CD4-positive, alpha-beta memory T cell (primary cell): ENCODE measurements at regions of chr15 and their contacts with region 1.

Region 1: DNA sequence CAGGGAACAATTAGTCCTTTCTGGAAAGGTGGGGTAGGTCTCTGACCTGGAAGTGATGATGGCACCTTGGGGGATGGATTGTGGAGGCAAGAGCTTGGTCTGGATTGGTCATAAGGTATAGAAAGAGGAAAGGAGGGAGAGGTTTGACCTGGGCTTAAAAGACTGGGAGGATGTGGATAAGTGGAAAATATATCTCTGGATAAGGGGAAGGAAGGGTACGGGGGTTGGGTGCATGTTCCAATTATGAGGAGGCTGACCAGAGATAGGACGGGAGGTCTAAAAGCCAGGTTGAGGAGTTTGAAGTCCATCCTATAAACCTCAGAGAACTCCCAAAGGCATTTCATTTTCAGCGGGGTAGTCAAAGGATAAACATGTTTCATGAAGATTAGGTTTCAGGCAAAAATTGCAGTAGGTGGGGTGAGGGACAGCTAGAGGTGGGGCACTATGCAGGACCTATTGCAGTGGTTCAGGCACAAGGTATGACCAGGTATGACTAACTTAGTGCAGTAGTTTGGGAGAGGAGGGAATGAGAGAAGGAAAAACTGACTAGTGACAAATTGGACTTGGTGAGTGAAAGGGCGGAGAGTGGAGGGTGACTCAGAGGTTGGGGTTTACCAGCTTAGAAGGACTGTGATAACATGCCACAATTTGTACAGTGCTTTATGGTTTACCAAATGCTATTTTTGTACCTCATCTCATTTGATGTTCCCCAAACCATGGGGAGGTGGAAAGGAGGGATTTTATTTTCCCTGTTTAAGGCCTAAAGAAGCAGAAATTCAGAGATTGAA is 10.7 kb downstream of the PDE8A start:
- DNase-seq: peak in 1 of 5 donors; percentile 61
- H3K4me3 ChIP-seq: no peak overlapping the region
- H3K4me3 Mint-ChIP-seq: peak overlapping the region in 4 of 8 donors; percentile 12 to 55 (median 32)
- H3K27ac ChIP-seq: no peak overlapping the region
- H3K27ac Mint-ChIP-seq: peak overlapping the region in 6 of 7 donors; percentile 1 to 99 (median 76)
- H3K4me1 ChIP-seq: peaks cover 50% of the 10 kb centered on the region
- H3K4me1 Mint-ChIP-seq: peaks cover 38 to 64% (median 49%) of the 10 kb centered on the region in 4 donors
- H3K27me3 ChIP-seq: no peaks in the 10 kb centered on the region
- H3K27me3 Mint-ChIP-seq: no peaks in the 10 kb centered on the region

Region 2: GRCh38 chr15:84915011-84915958 is 77.1 kb before region 1 on chr15:
- CTCF ChIA-PET with region 1: no interaction called
- POLR2A ChIA-PET with region 1: no interaction called
- intact Hi-C with region 1: no loop called
- DNase-seq: peak in 1 of 5 donors; percentile 46
- H3K4me3 ChIP-seq: no peak overlapping the region
- H3K4me3 Mint-ChIP-seq: no peak overlapping the region
- H3K27ac ChIP-seq: no peak overlapping the region
- H3K27ac Mint-ChIP-seq: peak overlapping the region in 2 of 7 donors; percentile 21 to 89
- H3K4me1 ChIP-seq: no peaks in the 10 kb centered on the region
- H3K4me1 Mint-ChIP-seq: peaks cover 0 to 2% (median 0%) of the 10 kb centered on the region in 4 donors
- H3K27me3 ChIP-seq: no peaks in the 10 kb centered on the region
- H3K27me3 Mint-ChIP-seq: peaks cover 6 to 10% of the 10 kb centered on the region in 2 donors

Region 3: DNA sequence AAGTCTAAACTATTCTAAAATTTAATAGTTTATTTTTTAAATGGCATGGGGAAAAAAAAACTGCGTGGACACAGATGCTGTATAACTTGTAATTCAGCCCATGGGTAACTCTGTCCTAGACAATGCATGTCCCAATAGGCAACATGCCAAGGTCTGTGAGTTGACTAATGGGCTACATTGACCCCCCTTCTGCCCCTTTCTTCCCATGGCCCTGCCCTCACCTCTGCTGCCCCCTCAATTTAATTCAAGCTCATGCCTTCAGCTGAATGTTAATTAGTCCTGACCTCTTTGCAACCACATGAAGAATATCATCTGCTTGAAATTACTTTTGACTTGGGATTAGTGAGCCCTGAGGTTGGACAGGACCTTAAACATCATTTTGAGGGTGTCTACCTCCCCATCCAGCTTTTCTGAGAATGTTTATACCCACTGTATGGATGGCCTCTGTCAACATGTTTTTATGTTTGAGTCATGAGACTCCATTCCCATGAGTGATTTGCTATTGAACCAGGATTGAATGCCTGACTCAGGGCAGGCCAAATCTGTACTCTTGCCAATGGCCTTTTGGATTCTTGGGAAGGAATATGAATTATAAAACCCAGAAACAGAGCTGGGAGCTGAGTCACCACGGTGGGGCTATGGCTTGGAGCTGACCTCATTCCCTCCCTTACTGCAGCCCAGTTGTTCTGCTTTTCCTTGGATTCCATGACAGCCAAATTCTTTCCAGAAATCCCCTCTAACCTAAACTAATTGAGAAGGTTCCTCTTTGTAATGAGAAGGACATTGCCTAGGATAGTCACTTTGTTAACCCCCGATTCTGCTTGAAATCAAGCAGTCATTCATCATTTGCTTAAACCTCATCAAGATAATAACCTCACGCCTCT is 44.2 kb before region 1 on chr15:
- CTCF ChIA-PET with region 1: no interaction called
- POLR2A ChIA-PET with region 1: no interaction called
- intact Hi-C with region 1: no loop called
- DNase-seq: no peak
- H3K4me3 ChIP-seq: no peak overlapping the region
- H3K4me3 Mint-ChIP-seq: no peak overlapping the region
- H3K27ac ChIP-seq: no peak overlapping the region
- H3K27ac Mint-ChIP-seq: no peak overlapping the region
- H3K4me1 ChIP-seq: no peaks in the 10 kb centered on the region
- H3K4me1 Mint-ChIP-seq: no peaks in the 10 kb centered on the region
- H3K27me3 ChIP-seq: no peaks in the 10 kb centered on the region
- H3K27me3 Mint-ChIP-seq: peaks cover 1 to 9% of the 10 kb centered on the region in 2 donors

Region 4: DNA sequence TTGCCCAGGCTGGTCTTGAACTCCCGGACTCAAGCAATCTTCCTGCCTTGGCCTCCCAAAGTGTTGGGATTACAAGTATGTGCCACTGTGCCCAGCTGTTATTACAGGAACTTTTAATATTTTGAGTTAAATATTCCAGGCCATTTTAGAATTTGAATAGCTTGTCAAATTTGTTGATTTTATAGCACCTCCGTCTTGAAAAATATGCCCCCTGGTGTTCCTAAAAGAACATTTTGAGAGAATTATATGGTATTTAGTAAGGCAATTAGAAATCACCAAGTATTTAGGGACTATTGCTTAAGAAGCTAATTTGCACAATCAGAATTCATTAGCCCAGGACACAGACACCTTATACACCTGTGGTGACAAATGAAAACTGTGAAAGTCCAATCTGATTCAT is 13.0 kb after region 1 on chr15:
- CTCF ChIA-PET with region 1: interaction called, 10 read pairs
- POLR2A ChIA-PET with region 1: interaction called, 7 read pairs
- intact Hi-C with region 1: loop called (anchors 2 kb)
- DNase-seq: no peak
- H3K4me3 ChIP-seq: no peak overlapping the region
- H3K4me3 Mint-ChIP-seq: no peak overlapping the region
- H3K27ac ChIP-seq: no peak overlapping the region
- H3K27ac Mint-ChIP-seq: no peak overlapping the region
- H3K4me1 ChIP-seq: peaks cover 55% of the 10 kb centered on the region
- H3K4me1 Mint-ChIP-seq: peaks cover 39 to 90% (median 65%) of the 10 kb centered on the region in 4 donors
- H3K27me3 ChIP-seq: no peaks in the 10 kb centered on the region
- H3K27me3 Mint-ChIP-seq: no peaks in the 10 kb centered on the region

Region 5: DNA sequence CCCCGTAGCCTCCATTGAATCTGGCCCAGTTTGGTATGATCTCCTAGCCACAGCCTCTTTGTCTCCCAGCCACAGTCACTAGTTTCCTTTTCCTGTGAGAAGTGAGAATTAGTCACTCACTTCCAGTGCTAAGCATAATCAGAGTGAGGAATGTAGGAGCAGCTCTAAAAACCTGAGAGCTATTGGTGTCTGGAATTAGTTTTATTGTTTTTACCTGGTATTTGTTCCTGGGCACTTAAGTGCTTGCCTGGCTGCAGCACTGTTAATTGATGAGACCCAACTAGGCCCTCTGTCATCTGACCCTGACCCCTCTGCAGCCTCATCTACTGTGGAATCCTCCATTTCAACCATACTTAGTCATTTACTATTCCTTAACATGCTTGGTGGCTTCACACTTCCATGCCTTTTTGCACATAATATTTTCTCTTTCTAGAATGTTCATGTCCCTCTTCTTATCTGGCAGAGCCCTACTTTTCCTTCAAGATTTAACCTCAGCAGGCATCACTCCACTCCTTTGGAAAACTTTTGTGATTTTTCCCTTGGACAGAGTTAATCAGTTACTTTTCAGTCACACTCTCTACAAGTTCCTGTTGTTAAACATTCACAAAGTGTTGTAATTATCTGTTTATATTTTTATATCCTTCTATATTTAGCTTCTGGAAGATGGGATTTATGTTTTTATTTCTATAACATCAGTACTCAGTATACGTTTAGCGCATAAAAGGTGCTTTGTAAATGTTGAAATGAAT is 38.1 kb after region 1 on chr15:
- CTCF ChIA-PET with region 1: no interaction called
- POLR2A ChIA-PET with region 1: no interaction called
- intact Hi-C with region 1: loop called (anchors 2 kb)
- DNase-seq: peak in 2 of 5 donors; percentile 17 to 51
- H3K4me3 ChIP-seq: no peak overlapping the region
- H3K4me3 Mint-ChIP-seq: peak overlapping the region in 7 of 8 donors; percentile 5 to 76 (median 53)
- H3K27ac ChIP-seq: no peak overlapping the region
- H3K27ac Mint-ChIP-seq: peak overlapping the region; percentile 38 to 86 (median 75)
- H3K4me1 ChIP-seq: peaks cover 55% of the 10 kb centered on the region
- H3K4me1 Mint-ChIP-seq: peaks cover 50 to 77% (median 59%) of the 10 kb centered on the region in 4 donors
- H3K27me3 ChIP-seq: no peaks in the 10 kb centered on the region
- H3K27me3 Mint-ChIP-seq: no peaks in the 10 kb centered on the region

Region 6: DNA sequence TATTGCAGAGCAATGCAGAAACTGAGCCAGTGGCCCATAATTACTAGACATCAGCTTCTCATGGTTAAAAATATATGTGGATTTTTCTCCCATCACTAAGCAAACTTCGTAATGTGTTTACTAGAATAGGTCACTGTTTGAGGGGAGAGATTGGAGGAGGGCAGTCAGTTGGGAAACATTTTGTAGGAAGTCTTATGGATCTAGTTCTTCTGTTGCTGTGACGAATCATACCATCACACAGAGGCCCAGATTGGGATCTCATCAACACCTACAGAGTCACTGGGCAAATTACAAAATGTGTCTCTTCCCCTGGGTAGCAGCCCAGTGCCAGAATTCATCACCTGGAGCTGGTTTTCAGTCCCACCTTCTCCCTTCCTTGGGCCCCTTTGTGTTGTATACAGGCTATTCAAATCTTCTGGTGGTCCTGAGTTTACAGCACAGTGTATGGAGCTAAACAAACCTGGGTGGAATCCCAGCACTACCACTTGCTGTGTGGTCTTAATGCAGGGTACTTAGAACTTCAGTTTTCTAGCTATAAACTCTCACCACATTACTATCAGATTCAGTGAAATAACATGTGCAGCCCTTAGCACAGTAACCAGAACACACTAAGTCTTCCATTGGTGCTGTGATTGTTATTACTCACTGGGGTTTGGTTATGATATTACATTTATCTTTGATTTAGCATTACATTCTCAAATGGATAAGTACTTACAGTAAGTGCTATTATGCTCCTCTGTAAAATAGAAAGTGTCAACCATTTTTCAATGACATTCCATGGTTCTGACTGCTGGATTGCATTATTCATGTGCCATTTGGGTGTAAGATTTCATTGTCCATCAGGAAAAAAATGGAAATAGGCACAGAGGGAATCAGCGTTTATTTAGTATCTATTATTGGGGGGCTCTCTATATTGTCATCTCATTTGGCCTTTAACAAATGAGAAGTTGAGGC is 71.1 kb after region 1 on chr15:
- CTCF ChIA-PET with region 1: no interaction called
- POLR2A ChIA-PET with region 1: no interaction called
- intact Hi-C with region 1: no loop called
- DNase-seq: no peak
- H3K4me3 ChIP-seq: no peak overlapping the region
- H3K4me3 Mint-ChIP-seq: no peak overlapping the region
- H3K27ac ChIP-seq: no peak overlapping the region
- H3K27ac Mint-ChIP-seq: peak overlapping the region in 1 of 7 donors; percentile 17
- H3K4me1 ChIP-seq: no peaks in the 10 kb centered on the region
- H3K4me1 Mint-ChIP-seq: peaks cover 9 to 36% (median 22%) of the 10 kb centered on the region in 4 donors
- H3K27me3 ChIP-seq: no peaks in the 10 kb centered on the region
- H3K27me3 Mint-ChIP-seq: no peaks in the 10 kb centered on the region